ENCODE measurements at regions of chr11 and their contacts with region 1.

Region 1: GRCh38 chr11:33207408-33207985 is 46.2 kb upstream of the CSTF3 start:
- DNase-seq: peak; percentile 74
- ATAC-seq: peak; percentile 74

Region 2: GRCh38 chr11:33257897-33258630 is 50.6 kb after region 1 on chr11:
- intact Hi-C with region 1: no loop called
- DNase-seq: peak; percentile 93
- ATAC-seq: peak; percentile 90

Region 3: GRCh38 chr11:33847251-33847650 is 639.8 kb after region 1 on chr11:
- intact Hi-C with region 1: loop called (anchors 5 kb)
- DNase-seq: no peak
- ATAC-seq: no peak

Measured in Right ventricle myocardium inferior (tissue), 1 donor.